KBM-7 (cell line): ENCODE measurements at regions of chr3 and their contacts with region 1.

Region 1: DNA sequence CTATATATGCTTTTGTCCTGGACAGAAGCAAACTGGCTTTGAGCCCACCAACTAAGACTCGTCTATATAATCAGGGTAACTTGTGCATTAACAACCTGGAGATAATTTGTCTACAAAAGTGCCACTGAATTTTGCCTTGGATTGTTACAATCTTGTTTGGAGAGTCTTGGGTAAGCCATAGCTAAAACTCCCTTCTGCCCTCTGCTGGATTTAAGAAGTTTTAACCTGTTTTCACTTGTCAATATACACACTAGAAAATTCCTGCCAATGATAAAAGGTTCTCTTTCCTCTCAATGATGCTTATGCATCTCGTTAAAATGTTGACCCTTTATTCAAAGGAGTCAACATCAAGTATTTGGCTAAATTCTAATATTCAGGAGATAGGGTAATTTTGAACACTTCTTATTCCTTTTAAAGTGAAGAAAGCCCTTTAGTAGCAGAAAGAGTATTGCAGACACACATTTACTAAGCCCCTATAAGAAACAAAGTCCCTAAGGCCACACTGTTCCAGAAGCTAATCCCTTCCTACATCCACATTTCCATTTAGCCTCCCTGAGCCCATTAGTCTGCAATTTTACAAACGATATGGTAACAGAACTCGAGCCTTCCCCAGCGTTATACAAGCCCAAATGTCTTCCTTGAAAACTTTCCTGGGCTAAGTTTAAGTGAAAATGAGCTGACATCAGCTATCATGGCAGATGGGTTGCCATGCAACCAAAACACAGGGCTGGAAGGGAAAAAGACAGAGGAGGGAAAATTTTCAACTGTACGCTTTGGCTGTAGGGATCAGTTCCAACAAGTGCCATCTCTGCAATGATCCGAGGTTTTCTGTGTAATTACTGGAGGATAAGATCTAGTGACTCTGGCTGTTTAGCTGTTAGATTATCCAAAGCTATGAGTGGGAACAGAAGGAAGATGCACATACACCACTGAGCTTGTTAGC is 75.9 kb upstream of the FGF12 start:
- DNase-seq: peak; percentile 49

Region 2: DNA sequence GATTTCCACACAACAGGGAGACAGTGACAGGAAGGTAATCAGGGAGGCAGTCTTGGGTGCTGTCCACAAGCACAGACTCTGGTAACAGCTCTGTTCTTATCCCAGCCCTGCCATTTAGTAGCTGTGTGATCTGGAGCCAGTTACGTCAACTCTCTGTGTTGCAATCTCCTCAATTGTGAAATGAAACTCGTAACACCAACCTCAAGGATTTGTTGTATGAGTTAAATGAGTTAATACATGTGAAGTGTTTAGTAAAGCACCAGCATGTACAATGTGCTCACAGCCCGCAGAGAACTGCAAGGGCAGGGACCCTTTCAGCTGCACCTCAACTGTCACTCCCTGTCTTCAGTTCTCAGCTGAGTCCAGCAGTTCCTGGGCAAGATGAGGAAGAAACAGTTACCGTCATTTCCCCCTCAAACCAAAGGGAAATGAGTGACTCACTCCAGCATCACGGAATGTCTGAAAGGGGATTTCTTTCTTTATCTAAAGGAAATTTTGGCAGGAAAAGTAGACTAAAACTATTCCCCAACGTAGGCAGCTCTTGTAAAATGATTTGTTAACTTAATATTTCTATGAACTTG is 154.3 kb after region 1 on chr3:
- in situ Hi-C with region 1: no loop called
- DNase-seq: peak; percentile 52

Region 3: DNA sequence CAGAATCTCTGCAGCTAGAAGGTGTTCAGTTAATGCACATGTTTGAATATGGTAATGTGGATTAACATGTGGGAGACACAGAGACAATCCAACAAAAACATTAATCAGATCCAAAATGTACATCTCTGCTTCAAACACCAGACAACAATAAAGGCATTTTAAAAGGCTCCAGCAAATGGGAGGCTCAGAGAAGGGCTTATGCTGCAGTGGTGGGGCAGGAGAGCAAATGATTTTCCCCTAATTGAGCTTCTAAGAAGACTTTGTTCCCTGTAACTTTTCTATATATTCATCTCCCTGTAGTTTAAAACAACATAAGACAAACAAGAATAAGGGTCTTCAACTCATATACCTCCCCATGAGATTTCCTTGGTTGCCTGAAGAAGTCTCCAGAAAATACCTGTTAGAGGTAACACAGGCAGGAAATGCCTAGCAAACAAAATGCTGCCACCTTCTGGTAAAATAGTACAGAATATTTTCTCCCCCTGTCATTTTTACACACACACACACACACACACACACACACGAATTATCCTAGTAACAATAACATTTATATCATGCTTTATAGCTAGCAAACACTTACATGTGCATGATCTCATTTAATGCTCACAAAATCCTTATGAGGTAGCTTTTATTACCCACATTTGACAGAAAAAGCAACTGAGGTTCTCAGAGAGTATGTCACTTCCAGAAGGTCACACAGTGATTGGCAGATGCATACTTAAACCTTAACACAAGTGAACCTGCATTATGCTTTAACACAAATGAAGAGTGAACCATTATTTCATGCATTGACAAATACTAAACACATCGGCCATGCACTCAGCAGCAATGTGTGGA is 237.8 kb after region 1 on chr3:
- in situ Hi-C with region 1: loop called (anchors 25 kb)
- DNase-seq: peak; percentile 58

Region 4: DNA sequence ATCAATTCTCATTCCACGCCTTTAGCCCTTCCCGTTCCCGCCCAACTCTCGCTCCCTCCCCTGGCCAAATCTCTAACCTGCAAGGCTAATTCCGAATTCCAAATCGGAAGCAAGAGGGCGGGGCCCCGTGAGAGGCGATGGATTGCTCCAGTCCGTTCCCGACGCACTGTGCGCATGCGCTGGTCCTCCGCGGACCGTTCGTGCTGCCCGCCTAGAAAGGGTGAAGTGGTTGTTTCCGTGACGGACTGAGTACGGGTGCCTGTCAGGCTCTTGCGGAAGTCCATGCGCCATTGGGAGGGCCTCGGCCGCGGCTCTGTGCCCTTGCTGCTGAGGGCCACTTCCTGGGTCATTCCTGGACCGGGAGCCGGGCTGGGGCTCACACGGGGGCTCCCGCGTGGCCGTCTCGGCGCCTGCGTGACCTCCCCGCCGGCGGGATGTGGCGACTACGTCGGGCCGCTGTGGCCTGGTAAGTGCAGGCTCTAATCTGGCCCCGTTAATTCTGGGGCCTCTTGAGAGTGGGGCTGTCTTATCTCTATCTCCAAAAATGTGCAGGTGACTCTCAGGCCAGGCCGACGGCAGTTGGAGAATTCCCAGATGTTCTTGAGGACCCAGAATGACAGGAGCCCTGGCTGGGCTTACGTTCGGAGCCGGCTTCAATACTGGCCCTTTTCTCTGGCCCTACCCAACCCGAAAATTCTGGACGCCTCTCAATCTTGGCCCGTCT is 789.9 kb after region 1 on chr3 and contains the start of gene OPA1:
- in situ Hi-C with region 1: loop called (anchors 25 kb)
- DNase-seq: peak; percentile 96